Adrenal gland (tissue), 19 donors: ENCODE measurements at regions of chr1 and their contacts with region 1.

Region 1: DNA sequence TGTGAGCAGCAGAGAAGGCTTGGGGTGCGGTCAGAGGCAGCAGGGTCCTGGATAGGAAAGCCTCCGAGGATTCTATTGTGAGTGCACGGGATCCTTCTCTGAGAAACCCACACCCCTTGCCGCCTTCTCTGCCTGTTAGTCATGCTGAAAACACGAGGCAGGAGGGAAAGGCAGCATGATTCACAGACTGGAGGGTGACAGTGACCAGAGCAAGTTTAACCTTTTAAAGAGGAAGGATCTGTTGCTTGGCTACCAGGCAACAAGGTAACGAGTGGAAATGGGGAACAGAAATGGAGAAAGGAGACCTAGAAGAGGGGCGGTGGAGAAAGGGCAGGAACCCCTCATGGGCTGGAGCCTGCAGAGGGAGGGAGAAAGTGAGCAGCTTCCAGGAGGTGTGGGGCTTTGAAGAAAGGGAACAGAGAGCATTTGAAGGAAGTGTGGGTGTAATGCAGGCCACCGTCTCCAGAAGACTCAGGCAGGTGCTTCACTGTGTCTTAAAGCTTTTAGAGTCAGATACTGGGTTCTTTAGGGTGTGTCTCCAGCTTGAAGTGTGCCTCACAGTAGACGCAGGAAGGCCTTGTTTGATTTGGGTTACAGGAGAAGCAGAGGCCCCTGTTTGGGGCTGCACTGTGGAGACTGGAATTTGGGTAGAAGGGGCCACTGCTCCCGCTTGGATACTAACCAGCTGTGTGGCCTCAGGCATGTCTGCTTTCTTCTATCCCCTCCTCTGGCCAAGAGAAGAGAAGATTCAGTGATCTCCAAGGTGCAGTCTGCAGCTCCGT is 19.1 kb downstream of the OPTC start:
- DNase-seq: peak; percentile 71 to 89 (median 85)
- H3K4me3 ChIP-seq: no peak overlapping the region
- H3K27ac ChIP-seq: peak overlapping the region in 3 of 5 donors; percentile 63 to 78 (median 66)
- H3K4me1 ChIP-seq: peaks cover 9 to 31% of the 10 kb centered on the region in 2 donors
- H3K27me3 ChIP-seq: no peaks in the 10 kb centered on the region
- CTCF ChIP-seq: no peak
- POLR2A ChIP-seq: peak in 1 of 2 donors; percentile 44

Region 2: GRCh38 chr1:203600782-203601736 is 88.0 kb after region 1 on chr1:
- intact Hi-C with region 1: loop called in 1 of 2 experiments (anchors 10 kb)
- DNase-seq: no peak
- H3K4me3 ChIP-seq: no peak overlapping the region
- H3K27ac ChIP-seq: peak overlapping the region in 1 of 5 donors; percentile 65
- H3K4me1 ChIP-seq: peaks cover 11 to 18% of the 10 kb centered on the region in 2 donors
- H3K27me3 ChIP-seq: no peaks in the 10 kb centered on the region
- CTCF ChIP-seq: no peak
- POLR2A ChIP-seq: no peak